Activated CD8-positive, alpha-beta T cell treated with anti-CD3 and anti-CD28 coated beads for 36 hours (primary cell): ENCODE measurements at regions of chr10 and their contacts with region 1.

Region 1: GRCh38 chr10:22599048-22599561 is 115.3 kb downstream of the PIP4K2A start:
- DNase-seq: no peak
- ATAC-seq: peak; percentile 37
- H3K4me3 Mint-ChIP-seq: no peak overlapping the region
- H3K27ac Mint-ChIP-seq: peak overlapping the region; percentile 75
- H3K4me1 Mint-ChIP-seq: peaks cover 79% of the 10 kb centered on the region
- H3K27me3 Mint-ChIP-seq: no peaks in the 10 kb centered on the region
- CTCF ChIP-seq: no peak

Region 2: DNA sequence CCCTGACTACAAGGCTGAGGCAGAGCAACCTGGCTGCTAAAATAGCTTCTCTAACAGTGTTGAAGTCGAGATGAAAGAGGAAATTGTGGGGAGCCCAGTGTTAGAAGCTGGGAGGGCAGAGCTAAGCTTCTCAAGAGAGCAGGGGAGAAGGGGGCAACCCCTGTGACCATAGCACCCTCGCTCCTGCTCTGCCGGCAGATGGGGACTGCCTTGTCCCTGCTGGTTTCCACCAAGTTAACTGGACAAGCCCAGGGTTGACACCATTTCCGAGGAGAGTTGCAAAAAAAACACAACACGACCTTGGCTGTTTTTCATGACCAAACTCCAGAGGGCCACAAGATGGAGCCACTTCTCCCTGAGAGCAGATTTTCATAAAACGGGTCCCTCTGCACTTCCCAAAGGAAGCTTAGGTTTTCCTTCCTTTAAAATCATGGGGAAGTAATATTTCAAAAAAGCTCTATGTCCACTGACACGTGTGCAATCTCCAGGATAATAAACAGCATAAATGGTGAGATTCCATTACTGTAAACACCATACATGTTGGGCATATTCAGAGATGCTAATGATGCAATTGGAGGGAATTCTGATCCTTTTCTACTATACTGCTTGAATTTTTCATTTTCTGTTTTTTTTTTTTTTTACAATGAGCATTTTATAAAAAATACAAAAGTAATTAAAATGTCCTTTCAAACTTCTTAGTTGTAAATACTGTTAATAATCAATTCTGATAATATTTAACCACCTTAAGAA is 25.1 kb before region 1 on chr10:
- CTCF ChIA-PET with region 1: interaction called, 14 read pairs
- POLR2A ChIA-PET with region 1: no interaction called
- intact Hi-C with region 1: no loop called
- DNase-seq: peak; percentile 56
- ATAC-seq: peak; percentile 35
- H3K4me3 Mint-ChIP-seq: peak overlapping the region; percentile 42
- H3K27ac Mint-ChIP-seq: peak overlapping the region; percentile 86
- H3K4me1 Mint-ChIP-seq: peaks cover 66% of the 10 kb centered on the region
- H3K27me3 Mint-ChIP-seq: no peaks in the 10 kb centered on the region
- CTCF ChIP-seq: peak; percentile 68

Region 3: DNA sequence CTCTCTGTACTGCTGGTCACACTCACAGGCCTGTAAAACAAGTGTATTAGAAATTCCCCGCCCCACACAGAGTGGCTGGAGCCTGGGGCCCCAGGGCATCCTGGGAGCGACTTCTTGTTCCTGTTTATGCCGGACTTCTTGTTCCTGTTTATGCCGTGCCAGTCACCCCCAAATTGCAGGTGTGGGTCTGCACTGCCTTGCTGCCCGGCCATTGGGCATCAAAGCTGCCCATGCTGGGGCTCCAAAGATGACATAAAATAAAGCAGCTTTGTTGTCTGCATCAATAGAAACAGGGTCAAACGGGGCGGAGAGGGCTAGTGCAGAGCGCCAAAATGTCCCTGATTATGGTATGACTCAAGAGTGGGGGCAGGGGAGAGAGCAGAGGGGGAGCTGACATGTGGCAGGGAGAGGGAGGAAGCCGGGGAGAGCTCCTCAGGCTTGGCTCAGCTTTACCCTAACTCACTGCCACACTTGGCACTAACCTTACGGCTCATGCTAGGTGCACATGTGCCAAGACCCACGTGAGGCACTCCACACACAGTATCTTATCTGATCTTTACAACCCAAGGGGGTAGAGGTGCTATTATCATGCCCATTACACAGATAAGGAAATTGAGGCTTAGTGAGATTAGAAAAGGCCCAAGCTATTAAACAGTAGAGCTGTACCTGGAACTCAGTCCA is 16.9 kb after region 1 on chr10:
- CTCF ChIA-PET with region 1: interaction called, 24 read pairs
- POLR2A ChIA-PET with region 1: interaction called, 8 read pairs
- intact Hi-C with region 1: no loop called
- DNase-seq: peak; percentile 62
- ATAC-seq: peak; percentile 43
- H3K4me3 Mint-ChIP-seq: peak overlapping the region; percentile 69
- H3K27ac Mint-ChIP-seq: peak overlapping the region; percentile 91
- H3K4me1 Mint-ChIP-seq: peaks cover 96% of the 10 kb centered on the region
- H3K27me3 Mint-ChIP-seq: no peaks in the 10 kb centered on the region
- CTCF ChIP-seq: no peak

Region 4: GRCh38 chr10:22643775-22644174 is 44.7 kb after region 1 on chr10:
- CTCF ChIA-PET with region 1: no interaction called
- POLR2A ChIA-PET with region 1: no interaction called
- intact Hi-C with region 1: no loop called
- DNase-seq: no peak
- ATAC-seq: no peak
- H3K4me3 Mint-ChIP-seq: peak overlapping the region; percentile 0
- H3K27ac Mint-ChIP-seq: peak overlapping the region; percentile 85
- H3K4me1 Mint-ChIP-seq: peaks cover 83% of the 10 kb centered on the region
- H3K27me3 Mint-ChIP-seq: no peaks in the 10 kb centered on the region
- CTCF ChIP-seq: no peak